Activated naive CD4-positive, alpha-beta T cell treated with anti-CD3 and anti-CD28 coated beads, Interleukin-2, amount 10 ng/mL, durations not matched to agents 7 days and 5 days (primary cell): ENCODE measurements at regions of chr6 and their contacts with region 1.

Region 1: DNA sequence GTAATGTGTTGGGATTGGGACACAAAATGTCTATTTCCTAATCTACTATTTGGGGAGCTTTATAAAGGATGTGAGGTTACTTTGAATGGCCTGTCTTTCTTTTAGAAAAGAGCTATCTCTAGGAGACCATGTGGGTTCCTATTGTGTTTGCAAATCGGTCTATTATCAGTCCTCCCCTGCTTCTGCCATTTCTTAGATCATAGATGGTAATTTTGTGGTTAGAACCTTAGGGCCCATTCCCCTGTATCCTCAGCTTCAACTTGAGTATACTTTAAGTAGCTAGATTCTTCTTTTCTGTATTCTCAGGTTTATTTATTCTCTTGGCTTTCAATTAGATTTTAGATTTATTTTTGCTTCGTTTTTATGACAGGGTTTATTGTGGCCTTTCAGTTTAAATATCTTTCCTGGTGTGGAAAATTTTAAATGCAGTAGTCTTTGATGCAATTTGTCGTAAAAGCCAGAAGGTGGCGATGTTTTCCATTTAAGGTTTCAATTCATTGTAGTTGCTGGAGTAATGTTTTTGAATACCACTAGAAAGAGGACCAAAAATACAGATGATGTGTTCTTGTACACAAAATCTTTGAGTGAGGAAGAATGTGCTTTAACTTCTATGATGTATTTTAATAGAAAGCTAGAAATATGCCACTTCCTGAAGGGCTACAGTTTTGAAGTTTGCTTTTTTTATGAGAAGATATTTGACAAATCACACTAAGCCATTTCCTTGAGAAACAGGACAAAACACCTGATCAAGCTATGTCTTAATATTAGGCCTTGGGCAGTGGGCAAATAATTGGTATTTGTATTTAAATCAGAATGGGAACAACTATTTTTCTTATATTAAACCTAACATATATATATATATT is 20.3 kb downstream of the TBPL1 start:
- DNase-seq: no peak
- H3K4me3 Mint-ChIP-seq: no peak overlapping the region
- H3K27ac Mint-ChIP-seq: no peak overlapping the region
- H3K4me1 Mint-ChIP-seq: peaks cover 16% of the 10 kb centered on the region
- H3K27me3 Mint-ChIP-seq: no peaks in the 10 kb centered on the region

Region 2: DNA sequence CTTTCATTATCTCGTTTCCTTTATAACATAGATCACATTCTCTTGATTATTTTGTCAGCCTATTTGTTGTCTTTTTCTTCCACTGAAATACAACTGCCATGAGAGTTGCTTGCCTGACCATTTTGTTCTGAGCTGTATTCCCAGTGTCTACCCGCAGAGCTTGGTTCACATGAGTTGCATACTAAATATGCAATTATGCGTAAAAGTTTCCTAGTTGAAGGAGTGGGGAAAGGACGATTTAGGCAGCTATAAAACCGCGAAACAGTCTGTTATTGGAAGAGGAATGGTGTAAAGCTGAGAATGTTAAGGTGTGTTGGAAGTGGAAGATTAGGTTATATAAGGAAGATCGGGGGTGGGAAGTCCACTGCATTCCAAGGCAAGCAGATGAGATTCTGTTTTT is 11.5 kb before region 1 on chr6:
- CTCF ChIA-PET with region 1: interaction called, 12 read pairs
- DNase-seq: no peak
- H3K4me3 Mint-ChIP-seq: no peak overlapping the region
- H3K27ac Mint-ChIP-seq: no peak overlapping the region
- H3K4me1 Mint-ChIP-seq: peaks cover 26% of the 10 kb centered on the region
- H3K27me3 Mint-ChIP-seq: no peaks in the 10 kb centered on the region

Region 3: GRCh38 chr6:134058622-134059366 is 85.5 kb after region 1 on chr6:
- CTCF ChIA-PET with region 1: interaction called, 109 read pairs
- DNase-seq: no peak
- H3K4me3 Mint-ChIP-seq: no peak overlapping the region
- H3K27ac Mint-ChIP-seq: no peak overlapping the region
- H3K4me1 Mint-ChIP-seq: no peaks in the 10 kb centered on the region
- H3K27me3 Mint-ChIP-seq: peaks cover 4% of the 10 kb centered on the region

Region 4: DNA sequence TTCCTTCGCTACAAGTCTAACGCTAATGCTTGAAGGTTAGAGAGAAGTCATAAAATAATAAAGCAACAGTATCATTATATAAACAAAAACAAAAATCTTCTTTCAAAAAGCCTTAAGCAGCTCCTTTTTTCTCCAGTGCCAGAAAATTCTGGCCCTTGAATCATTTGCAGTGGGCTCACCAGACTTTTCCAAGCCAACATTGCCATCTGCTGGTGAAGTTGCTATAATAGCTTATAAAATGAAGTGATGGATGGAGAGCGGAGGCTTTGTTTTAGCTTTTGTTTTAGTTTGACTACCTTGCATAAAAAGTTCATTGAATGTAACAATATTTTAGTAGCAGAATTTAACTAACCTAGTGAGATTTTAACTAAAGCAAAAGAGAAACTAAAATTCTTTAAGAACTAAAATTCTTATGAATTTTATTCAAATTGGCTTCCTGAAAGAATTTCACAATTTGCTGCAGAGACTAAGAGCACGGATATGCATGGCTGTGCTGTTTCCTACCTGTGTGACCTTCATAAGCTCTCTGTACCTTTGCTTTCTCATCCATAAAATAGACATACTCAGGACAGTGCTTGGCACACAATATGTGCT is 123.9 kb after region 1 on chr6:
- CTCF ChIA-PET with region 1: interaction called, 31 read pairs
- DNase-seq: peak; percentile 79
- H3K4me3 Mint-ChIP-seq: no peak overlapping the region
- H3K27ac Mint-ChIP-seq: no peak overlapping the region
- H3K4me1 Mint-ChIP-seq: peaks cover 4% of the 10 kb centered on the region
- H3K27me3 Mint-ChIP-seq: peaks cover 14% of the 10 kb centered on the region